ENCODE measurements at regions of chr22 and their contacts with region 1.

Region 1: DNA sequence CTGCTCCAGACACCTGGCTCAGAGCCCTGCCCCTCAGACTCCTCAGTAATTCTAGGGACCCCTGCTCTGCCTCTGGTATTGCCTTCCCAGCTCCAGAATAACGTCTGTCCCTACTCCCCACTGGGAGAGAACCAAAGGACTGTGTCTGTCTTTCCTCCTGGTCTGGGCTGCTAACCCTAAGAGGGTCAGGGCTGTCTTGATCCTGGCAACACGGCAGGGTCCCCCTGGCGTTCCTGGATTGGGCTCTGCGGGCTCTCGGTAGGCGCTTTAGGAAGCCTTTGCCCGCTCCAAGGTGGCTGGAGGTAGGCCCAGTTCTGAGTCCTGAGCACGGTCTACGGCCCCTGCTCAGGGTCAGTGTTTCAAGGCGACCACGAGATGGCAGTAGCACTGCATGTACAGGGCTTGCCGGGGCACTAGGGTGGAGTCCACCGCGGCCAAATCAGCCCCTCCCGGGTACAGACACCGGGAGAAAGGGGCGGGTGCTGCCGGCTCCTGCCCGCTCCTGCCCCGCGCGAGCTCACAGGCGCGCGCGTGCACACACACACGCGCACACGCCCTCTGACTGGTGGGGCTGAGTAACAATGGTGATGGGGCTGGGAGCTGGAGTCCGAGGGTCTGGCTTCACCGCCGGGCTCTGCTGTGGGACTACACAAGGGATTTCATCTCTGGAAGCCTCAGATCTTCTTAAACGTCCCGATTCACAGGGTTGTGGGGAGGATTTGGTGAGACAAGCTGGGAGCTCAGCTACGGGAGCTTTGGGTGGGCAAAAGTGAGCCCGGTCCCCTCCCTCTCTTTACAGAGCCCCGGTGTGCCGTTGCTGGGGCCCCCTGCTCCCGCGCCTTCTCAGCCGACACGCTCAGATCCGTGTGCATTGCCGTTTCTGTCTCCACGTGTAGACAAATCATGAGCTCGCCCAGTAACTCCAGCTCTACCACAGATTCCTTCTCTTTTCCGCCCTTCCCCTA is 30.1 kb upstream of the HMOX1 start:
- DNase-seq: peak; percentile 82
- ATAC-seq: peak; percentile 64
- H3K4me3 Mint-ChIP-seq: peak overlapping the region; percentile 86
- H3K27ac Mint-ChIP-seq: peak overlapping the region; percentile 98
- H3K4me1 Mint-ChIP-seq: peaks cover 59% of the 10 kb centered on the region
- H3K27me3 Mint-ChIP-seq: no peaks in the 10 kb centered on the region
- CTCF ChIP-seq: peak; percentile 79

Region 2: GRCh38 chr22:35376728-35377472 is 26.1 kb after region 1 on chr22:
- CTCF ChIA-PET with region 1: interaction called, 7 read pairs
- POLR2A ChIA-PET with region 1: interaction called, 39 read pairs
- intact Hi-C with region 1: loop called (anchors 1 kb)
- DNase-seq: peak; percentile 44
- ATAC-seq: peak; percentile 78
- H3K4me3 Mint-ChIP-seq: peak overlapping the region; percentile 59
- H3K27ac Mint-ChIP-seq: peak overlapping the region; percentile 86
- H3K4me1 Mint-ChIP-seq: peaks cover 49% of the 10 kb centered on the region
- H3K27me3 Mint-ChIP-seq: no peaks in the 10 kb centered on the region
- CTCF ChIP-seq: no peak

Region 3: GRCh38 chr22:35430897-35431322 is 80.1 kb after region 1 on chr22:
- CTCF ChIA-PET with region 1: interaction called, 12 read pairs
- POLR2A ChIA-PET with region 1: interaction called, 4 read pairs
- intact Hi-C with region 1: loop called (anchors 1 kb)
- DNase-seq: peak; percentile 58
- ATAC-seq: peak; percentile 83
- H3K4me3 Mint-ChIP-seq: no peak overlapping the region
- H3K27ac Mint-ChIP-seq: no peak overlapping the region
- H3K4me1 Mint-ChIP-seq: peaks cover 4% of the 10 kb centered on the region
- H3K27me3 Mint-ChIP-seq: no peaks in the 10 kb centered on the region
- CTCF ChIP-seq: no peak

Region 4: GRCh38 chr22:35627264-35628041 is 276.6 kb after region 1 on chr22:
- CTCF ChIA-PET with region 1: no interaction called
- POLR2A ChIA-PET with region 1: no interaction called
- intact Hi-C with region 1: loop called (anchors 1 kb)
- DNase-seq: no peak
- ATAC-seq: no peak
- H3K4me3 Mint-ChIP-seq: no peak overlapping the region
- H3K27ac Mint-ChIP-seq: no peak overlapping the region
- H3K4me1 Mint-ChIP-seq: peaks cover 19% of the 10 kb centered on the region
- H3K27me3 Mint-ChIP-seq: peaks cover 43% of the 10 kb centered on the region
- CTCF ChIP-seq: no peak

Region 5: GRCh38 chr22:36065775-36066559 is 715.1 kb after region 1 on chr22:
- CTCF ChIA-PET with region 1: no interaction called
- POLR2A ChIA-PET with region 1: no interaction called
- intact Hi-C with region 1: loop called (anchors 5 kb)
- DNase-seq: peak; percentile 47
- ATAC-seq: peak; percentile 47
- H3K4me3 Mint-ChIP-seq: peak overlapping the region; percentile 70
- H3K27ac Mint-ChIP-seq: no peak overlapping the region
- H3K4me1 Mint-ChIP-seq: peaks cover 11% of the 10 kb centered on the region
- H3K27me3 Mint-ChIP-seq: peaks cover 27% of the 10 kb centered on the region
- CTCF ChIP-seq: peak; percentile 76